Endothelial cell of umbilical vein (primary cell): ENCODE measurements at regions of chr3 and their contacts with region 1.

Region 1: GRCh38 chr3:40524568-40525285 is at the start of gene ZNF621:
- DNase-seq: peak; percentile 87
- H3K4me3 ChIP-seq: peak within 1 kb of the TSS; percentile 69 to 91 (median 84)
- H3K27ac ChIP-seq: peak within 1 kb of the TSS; percentile 71
- H3K4me1 ChIP-seq: peaks cover 14% of the 10 kb centered on the region
- H3K27me3 ChIP-seq: no peaks in the 10 kb centered on the region
- CTCF ChIP-seq: no peak
- POLR2A ChIP-seq: peak; percentile 94
- total RNA-seq, gene ZNF621: 20.6 and 22.5 TPM in 2 replicates

Region 2: GRCh38 chr3:40445062-40445461 is 79.7 kb before region 1 on chr3:
- CTCF ChIA-PET with region 1: no interaction called
- POLR2A ChIA-PET with region 1: no interaction called
- dilution Hi-C with region 1: no loop called
- intact Hi-C with region 1: no loop called
- DNase-seq: no peak
- H3K4me3 ChIP-seq: no peak overlapping the region
- H3K27ac ChIP-seq: no peak overlapping the region
- H3K4me1 ChIP-seq: no peaks in the 10 kb centered on the region
- H3K27me3 ChIP-seq: no peaks in the 10 kb centered on the region
- CTCF ChIP-seq: no peak
- POLR2A ChIP-seq: no peak

Region 3: GRCh38 chr3:40476478-40477470 is 48.0 kb before region 1 on chr3 and contains the start of gene ZNF619:
- CTCF ChIA-PET with region 1: interaction called, 5 read pairs
- POLR2A ChIA-PET with region 1: no interaction called
- dilution Hi-C with region 1: no loop called
- intact Hi-C with region 1: loop called (anchors 1 kb)
- DNase-seq: peak; percentile 77
- H3K4me3 ChIP-seq: peak within 1 kb of the TSS; percentile 50 to 78 (median 71)
- H3K27ac ChIP-seq: peak within 1 kb of the TSS; percentile 68
- H3K4me1 ChIP-seq: peaks cover 7% of the 10 kb centered on the region
- H3K27me3 ChIP-seq: no peaks in the 10 kb centered on the region
- CTCF ChIP-seq: no peak
- POLR2A ChIP-seq: peak; percentile 84
- total RNA-seq, gene ZNF619: 4.4 and 7.2 TPM in 2 replicates